Psoas muscle (tissue), 8 donors: ENCODE measurements at regions of chr2 and their contacts with region 1.

Region 1: GRCh38 chr2:30127016-30127893 is 19.6 kb upstream of the YPEL5 start:
- DNase-seq: no peak
- ATAC-seq: no peak
- H3K4me3 ChIP-seq: no peak overlapping the region
- H3K27ac ChIP-seq: no peak overlapping the region
- H3K4me1 ChIP-seq: no peaks in the 10 kb centered on the region
- H3K27me3 ChIP-seq: no peaks in the 10 kb centered on the region
- CTCF ChIP-seq: no peak

Region 2: GRCh38 chr2:30098266-30099005 is 28.8 kb before region 1 on chr2:
- intact Hi-C with region 1: loop called in 1 of 2 experiments (anchors 5 kb)
- DNase-seq: no peak
- ATAC-seq: no peak
- H3K4me3 ChIP-seq: no peak overlapping the region
- H3K27ac ChIP-seq: no peak overlapping the region
- H3K4me1 ChIP-seq: no peaks in the 10 kb centered on the region
- H3K27me3 ChIP-seq: peaks cover 2 to 31% (median 5%) of the 10 kb centered on the region in 3 donors
- CTCF ChIP-seq: no peak